HEK293 (cell line): ENCODE measurements at regions of chr12 and their contacts with region 1.

Region 1: GRCh38 chr12:120469450-120470149 is at the start of gene SRSF9:
- H3K4me3 ChIP-seq: peak within 1 kb of the TSS; percentile 96
- H3K27ac ChIP-seq: peak within 1 kb of the TSS; percentile 99
- H3K4me1 ChIP-seq: peaks cover 14% of the 10 kb centered on the region; the same call in 1 of the 2 replicates
- CTCF ChIP-seq: peak; percentile 99

Region 2: GRCh38 chr12:120413901-120414695 is 55.5 kb before region 1 on chr12:
- CTCF ChIA-PET with region 1: no interaction called
- POLR2A ChIA-PET with region 1: no interaction called
- H3K4me3 ChIP-seq: no peak overlapping the region
- H3K27ac ChIP-seq: peak overlapping the region; percentile 71
- H3K4me1 ChIP-seq: 0 out of 2 replicates have a peak, but pooled peaks cover 3% of the 10 kb centered on the region
- CTCF ChIP-seq: no peak

Region 3: DNA sequence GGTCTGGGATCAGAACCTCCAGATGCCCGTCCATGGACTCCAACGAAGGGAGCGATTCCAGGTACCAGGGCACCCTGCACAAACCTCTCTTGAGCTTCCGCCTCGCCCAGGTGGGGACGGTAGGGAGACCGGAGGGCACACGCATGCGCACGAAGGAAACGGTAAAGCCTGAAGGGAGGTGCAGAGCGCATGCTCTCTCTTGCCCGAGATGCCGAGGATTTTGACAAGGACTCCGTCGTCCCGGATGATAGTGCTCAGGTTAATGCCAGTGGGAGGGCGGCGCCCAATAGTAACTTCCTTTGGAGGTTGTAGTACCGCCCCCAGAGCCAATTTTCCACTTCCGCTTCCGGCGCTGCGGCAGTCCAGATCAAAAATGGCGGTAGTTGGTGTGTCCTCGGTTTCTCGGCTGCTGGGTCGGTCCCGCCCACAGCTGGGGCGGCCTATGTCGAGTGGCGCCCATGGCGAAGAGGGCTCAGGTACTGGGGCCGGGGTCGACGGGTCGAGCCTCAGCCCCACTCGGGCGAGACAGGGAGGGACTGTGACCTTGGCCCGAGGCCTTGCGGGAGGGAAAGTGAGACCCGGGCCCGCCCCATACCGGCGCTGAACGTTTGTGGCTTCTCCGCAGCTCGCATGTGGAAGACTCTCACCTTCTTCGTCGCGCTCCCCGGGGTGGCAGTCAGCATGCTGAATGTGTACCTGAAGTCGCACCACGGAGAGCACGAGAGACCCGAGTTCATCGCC is 31.7 kb before region 1 on chr12 and contains the start of gene COX6A1:
- CTCF ChIA-PET with region 1: interaction called, 10 read pairs
- POLR2A ChIA-PET with region 1: interaction called, 5 read pairs
- H3K4me3 ChIP-seq: peak within 1 kb of the TSS; percentile 90
- H3K27ac ChIP-seq: peak within 1 kb of the TSS; percentile 75
- H3K4me1 ChIP-seq: no peaks in the 10 kb centered on the region
- CTCF ChIP-seq: peak; percentile 35; the same call in 1 of the 2 replicates

Region 4: GRCh38 chr12:120453977-120454376 is 15.6 kb before region 1 on chr12:
- CTCF ChIA-PET with region 1: interaction called, 30 read pairs
- POLR2A ChIA-PET with region 1: interaction called, 7 read pairs
- H3K4me3 ChIP-seq: no peak overlapping the region
- H3K27ac ChIP-seq: no peak overlapping the region
- H3K4me1 ChIP-seq: no peaks in the 10 kb centered on the region
- CTCF ChIP-seq: peak; percentile 53; the same call in 1 of the 2 replicates

Region 5: DNA sequence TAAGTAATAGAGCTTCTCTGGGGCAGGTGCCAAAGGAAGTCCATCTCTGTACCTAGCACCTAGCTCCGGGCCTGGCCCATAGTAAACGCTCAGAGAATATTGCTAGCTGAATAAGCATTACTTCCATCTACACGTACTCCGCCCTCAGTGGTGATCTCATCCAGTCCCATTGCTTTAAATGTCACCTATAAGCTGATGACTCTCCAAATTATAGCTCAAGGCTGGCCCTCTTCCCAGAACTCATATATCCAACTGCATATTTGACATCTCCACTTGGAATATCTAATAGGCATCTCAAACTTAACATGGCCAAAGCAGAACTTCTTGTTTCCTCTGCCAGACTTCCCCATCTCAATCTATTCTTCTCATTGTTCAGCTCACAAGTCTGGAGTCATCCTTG is 19.4 kb after region 1 on chr12:
- CTCF ChIA-PET with region 1: interaction called, 10 read pairs
- POLR2A ChIA-PET with region 1: interaction called, 6 read pairs
- H3K4me3 ChIP-seq: no peak overlapping the region
- H3K27ac ChIP-seq: no peak overlapping the region
- H3K4me1 ChIP-seq: no peaks in the 10 kb centered on the region; the same call in 1 of the 2 replicates
- CTCF ChIP-seq: no peak